ENCODE measurements at regions of chr6 and their contacts with region 1.

Region 1: DNA sequence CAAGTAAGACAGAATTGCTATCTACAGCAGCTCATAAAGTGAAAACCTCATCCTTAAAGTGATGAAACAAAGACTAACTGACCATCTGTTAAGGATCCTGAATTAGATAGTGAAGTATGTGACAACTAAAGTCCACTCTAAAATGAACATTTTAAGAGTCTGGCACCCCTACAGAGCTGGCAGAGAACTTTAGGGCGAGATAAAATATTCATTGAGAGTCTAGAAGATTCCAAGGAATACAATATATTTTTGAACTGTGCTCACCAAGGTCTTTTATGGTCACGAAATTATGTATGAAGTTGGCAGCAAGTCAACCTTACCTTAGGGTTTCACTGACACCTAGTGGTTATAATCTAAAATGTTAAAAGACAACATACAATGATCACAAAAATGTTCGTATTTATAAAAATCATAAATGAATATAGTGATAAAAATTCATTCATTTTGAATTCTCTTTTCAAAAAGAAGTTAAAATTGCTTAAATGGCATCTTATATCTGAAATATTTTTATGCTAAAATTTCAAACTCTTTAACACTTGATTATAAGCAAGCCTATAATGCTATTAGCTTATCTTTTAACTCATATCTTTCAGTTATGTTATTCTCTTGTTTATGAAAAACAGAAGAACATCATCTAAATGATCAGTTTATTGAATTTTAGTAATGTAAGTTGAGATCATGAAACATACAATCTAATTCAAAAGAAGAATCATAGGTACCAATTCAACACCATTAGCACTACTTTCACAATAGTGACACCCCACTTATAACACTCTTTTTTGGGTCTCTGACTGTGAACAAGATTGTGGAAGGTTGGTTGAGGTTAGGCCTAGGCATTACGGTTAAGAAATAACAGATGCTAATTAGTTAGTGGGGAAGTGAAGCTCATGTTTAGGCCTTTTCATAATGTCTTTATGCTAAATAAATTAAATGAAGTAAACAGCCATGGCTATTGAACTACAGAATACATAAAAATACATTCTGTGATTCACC is 27.5 kb downstream of the RSPH3 start:
- DNase-seq: peak; percentile 31
- ATAC-seq: peak; percentile 85
- H3K4me3 ChIP-seq: no peak overlapping the region
- H3K27ac ChIP-seq: no peak overlapping the region
- H3K4me1 ChIP-seq: no peaks in the 10 kb centered on the region
- H3K27me3 ChIP-seq: no peaks in the 10 kb centered on the region
- CTCF ChIP-seq: peak; percentile 33 to 68 (median 36); a peak in 4 of 6 replicates
- EP300 ChIP-seq: no peak
- POLR2A ChIP-seq: no peak
- RAD21 ChIP-seq: peak; percentile 81

Region 2: GRCh38 chr6:158686791-158687381 is 285.7 kb before region 1 on chr6:
- CTCF ChIA-PET with region 1: interaction called, 26 read pairs
- POLR2A ChIA-PET with region 1: no interaction called
- RAD21 ChIA-PET with region 1: interaction called, 18 read pairs
- SMC1A ChIA-PET with region 1: interaction called, 22 read pairs
- in situ Hi-C with region 1: no loop called
- intact Hi-C with region 1: no loop called
- DNase-seq: no peak
- ATAC-seq: peak; percentile 71
- H3K4me3 ChIP-seq: no peak overlapping the region
- H3K27ac ChIP-seq: no peak overlapping the region
- H3K4me1 ChIP-seq: peaks cover 13% of the 10 kb centered on the region
- H3K27me3 ChIP-seq: no peaks in the 10 kb centered on the region
- CTCF ChIP-seq: no peak
- EP300 ChIP-seq: no peak
- POLR2A ChIP-seq: no peak
- RAD21 ChIP-seq: no peak

Region 3: DNA sequence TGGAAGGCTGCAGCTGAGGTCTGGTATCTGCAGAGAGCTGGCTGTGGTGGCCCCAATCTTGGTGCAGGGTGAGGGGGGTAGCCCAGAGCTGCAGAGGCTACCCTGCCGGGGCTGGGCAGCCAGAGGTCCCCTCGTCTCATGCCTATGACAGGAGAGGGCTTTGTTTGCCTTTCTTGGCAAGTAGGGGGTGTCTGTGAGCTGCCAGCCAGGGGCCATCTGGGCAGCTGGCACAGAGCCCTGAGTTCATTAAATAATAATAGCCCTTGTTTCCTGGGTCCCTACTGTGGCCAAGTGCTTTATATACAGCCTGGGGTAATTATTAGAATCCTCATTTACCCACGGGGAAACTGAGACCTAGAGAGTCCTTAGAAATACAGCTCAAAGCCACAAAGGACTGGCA is 219.9 kb before region 1 on chr6:
- CTCF ChIA-PET with region 1: interaction called, 11 read pairs
- POLR2A ChIA-PET with region 1: interaction called, 3 read pairs
- RAD21 ChIA-PET with region 1: interaction called, 3 read pairs
- SMC1A ChIA-PET with region 1: interaction called, 7 read pairs
- in situ Hi-C with region 1: no loop called
- intact Hi-C with region 1: no loop called
- DNase-seq: no peak
- ATAC-seq: peak; percentile 78
- H3K4me3 ChIP-seq: no peak overlapping the region
- H3K27ac ChIP-seq: no peak overlapping the region
- H3K4me1 ChIP-seq: no peaks in the 10 kb centered on the region; the same call in 1 of the 2 replicates
- H3K27me3 ChIP-seq: no peaks in the 10 kb centered on the region
- CTCF ChIP-seq: peak in 2 of 3 experiments; percentile 21 to 22; a peak in 2 of 6 replicates
- EP300 ChIP-seq: no peak
- POLR2A ChIP-seq: no peak
- RAD21 ChIP-seq: no peak

Region 4: GRCh38 chr6:158808941-158809678 is 163.4 kb before region 1 on chr6:
- CTCF ChIA-PET with region 1: interaction called, 10 read pairs
- POLR2A ChIA-PET with region 1: no interaction called
- RAD21 ChIA-PET with region 1: interaction called, 8 read pairs
- SMC1A ChIA-PET with region 1: interaction called, 39 read pairs
- in situ Hi-C with region 1: no loop called
- intact Hi-C with region 1: no loop called
- DNase-seq: peak; percentile 80
- ATAC-seq: peak; percentile 69
- H3K4me3 ChIP-seq: peak overlapping the region; percentile 29; the same call in 1 of the 2 replicates
- H3K27ac ChIP-seq: peak overlapping the region; percentile 54
- H3K4me1 ChIP-seq: peaks cover 76% of the 10 kb centered on the region
- H3K27me3 ChIP-seq: no peaks in the 10 kb centered on the region
- CTCF ChIP-seq: no peak
- EP300 ChIP-seq: peak; percentile 75 to 91
- POLR2A ChIP-seq: no peak
- RAD21 ChIP-seq: no peak

Region 5: GRCh38 chr6:158938811-158939254 is 33.7 kb before region 1 on chr6:
- CTCF ChIA-PET with region 1: no interaction called
- POLR2A ChIA-PET with region 1: no interaction called
- RAD21 ChIA-PET with region 1: no interaction called
- SMC1A ChIA-PET with region 1: no interaction called
- in situ Hi-C with region 1: no loop called
- intact Hi-C with region 1: no loop called
- DNase-seq: no peak
- ATAC-seq: peak; percentile 87
- H3K4me3 ChIP-seq: peak overlapping the region; percentile 55
- H3K27ac ChIP-seq: no peak overlapping the region
- H3K4me1 ChIP-seq: peaks cover 9% of the 10 kb centered on the region
- H3K27me3 ChIP-seq: no peaks in the 10 kb centered on the region
- CTCF ChIP-seq: no peak
- EP300 ChIP-seq: no peak
- POLR2A ChIP-seq: no peak
- RAD21 ChIP-seq: no peak

Region 6: DNA sequence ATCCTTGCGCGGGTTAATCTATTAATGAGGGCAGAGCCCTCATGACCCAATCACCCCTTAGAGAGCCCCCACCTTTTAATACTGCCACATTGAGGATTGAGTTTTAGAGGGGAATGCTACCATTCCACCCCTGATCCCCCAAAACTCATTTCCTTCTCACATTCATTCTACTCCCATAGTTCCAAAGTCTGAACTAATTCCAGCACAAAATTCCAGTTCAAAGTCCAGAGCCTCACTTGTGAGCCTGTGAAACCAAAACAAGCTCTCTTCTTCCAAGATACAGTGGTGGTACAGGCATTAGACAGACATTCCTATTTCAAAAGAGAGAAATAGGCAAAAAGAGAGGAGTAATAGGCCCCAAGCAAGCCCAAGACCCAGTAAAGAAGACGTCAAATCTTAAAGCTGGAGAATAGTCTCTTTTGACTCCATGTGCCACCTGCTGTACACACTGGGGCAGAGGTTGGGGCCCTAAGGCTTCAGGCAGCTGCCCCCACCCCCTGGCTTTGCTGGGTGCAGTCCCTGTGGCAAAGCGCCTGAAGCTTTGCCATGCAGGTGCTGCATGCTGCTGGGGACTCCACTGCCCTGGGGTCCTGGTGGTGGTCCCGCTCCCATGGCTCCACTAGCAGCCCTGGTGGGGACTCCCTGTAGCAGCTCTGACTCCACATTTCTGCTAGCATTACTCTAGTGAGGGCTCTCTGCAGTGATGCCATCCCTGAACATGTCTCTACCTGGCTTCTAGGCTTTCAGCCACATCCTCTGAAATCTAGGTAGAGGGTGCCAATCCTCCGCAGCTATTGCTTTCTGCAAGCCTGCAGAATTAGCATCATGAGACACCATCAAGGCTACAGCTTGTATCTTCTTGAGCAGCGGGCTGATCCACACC is 13.8 kb before region 1 on chr6:
- CTCF ChIA-PET with region 1: interaction called, 12 read pairs
- POLR2A ChIA-PET with region 1: interaction called, 3 read pairs
- RAD21 ChIA-PET with region 1: interaction called, 8 read pairs
- SMC1A ChIA-PET with region 1: interaction called, 10 read pairs
- in situ Hi-C with region 1: no loop called
- intact Hi-C with region 1: no loop called
- DNase-seq: no peak
- ATAC-seq: peak; percentile 86
- H3K4me3 ChIP-seq: no peak overlapping the region
- H3K27ac ChIP-seq: no peak overlapping the region
- H3K4me1 ChIP-seq: no peaks in the 10 kb centered on the region
- H3K27me3 ChIP-seq: no peaks in the 10 kb centered on the region
- CTCF ChIP-seq: peak; percentile 28 to 46 (median 36); a peak in 4 of 6 replicates
- EP300 ChIP-seq: no peak
- POLR2A ChIP-seq: no peak
- RAD21 ChIP-seq: peak; percentile 54

Region 7: DNA sequence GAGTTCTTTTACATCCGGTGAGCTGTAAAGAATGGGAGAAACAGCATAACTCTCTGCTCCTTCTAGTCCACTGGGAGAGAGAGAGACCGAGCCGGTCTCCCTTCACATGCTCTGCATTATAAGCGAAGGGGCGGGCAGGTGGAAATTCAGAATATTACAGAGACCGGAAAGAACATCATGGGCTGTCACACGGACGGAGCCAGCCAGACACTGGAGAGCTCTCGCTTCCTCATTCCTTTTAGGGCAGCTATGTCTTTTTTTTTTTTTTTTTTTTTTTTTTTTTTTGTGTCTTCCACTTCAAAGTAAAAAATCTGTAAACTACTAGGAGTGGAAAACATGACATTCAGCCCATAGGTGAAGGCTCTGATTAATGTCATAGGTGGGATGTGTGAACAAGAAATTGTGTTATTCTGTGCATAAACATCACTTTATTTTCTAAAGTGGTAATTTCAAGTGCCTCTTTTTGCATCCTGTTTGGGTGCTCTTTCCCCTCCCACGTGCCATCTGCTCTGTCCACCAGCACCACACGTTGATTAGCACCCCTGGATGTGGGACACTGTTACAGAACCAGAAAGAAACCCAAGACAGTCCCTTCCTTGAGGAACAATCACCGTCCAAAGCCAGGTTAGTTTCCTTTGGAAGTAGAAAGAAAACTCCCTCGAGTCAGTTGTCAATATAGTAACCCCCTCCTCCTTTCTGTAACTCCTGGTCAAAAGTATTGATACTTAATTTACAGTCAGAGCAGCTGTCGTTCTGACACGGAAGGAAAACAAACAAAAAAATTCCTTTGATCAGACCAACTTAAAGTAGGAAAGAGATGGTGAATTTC is 72.6 kb after region 1 on chr6 and contains the start of gene TAGAP:
- CTCF ChIA-PET with region 1: no interaction called
- POLR2A ChIA-PET with region 1: no interaction called
- RAD21 ChIA-PET with region 1: no interaction called
- SMC1A ChIA-PET with region 1: no interaction called
- in situ Hi-C with region 1: no loop called
- intact Hi-C with region 1: no loop called
- DNase-seq: peak; percentile 63
- ATAC-seq: peak; percentile 89
- H3K4me3 ChIP-seq: peak within 1 kb of the TSS; percentile 60
- H3K27ac ChIP-seq: peak within 1 kb of the TSS; percentile 50
- H3K4me1 ChIP-seq: peaks cover 26% of the 10 kb centered on the region
- H3K27me3 ChIP-seq: no peaks in the 10 kb centered on the region
- CTCF ChIP-seq: no peak
- EP300 ChIP-seq: no peak
- POLR2A ChIP-seq: peak; percentile 57; the same call in 1 of the 2 replicates
- RAD21 ChIP-seq: no peak; the same call in 1 of the 2 replicates
- polyA plus RNA-seq, gene TAGAP: 5.3 to 5.4 TPM

Region 8: DNA sequence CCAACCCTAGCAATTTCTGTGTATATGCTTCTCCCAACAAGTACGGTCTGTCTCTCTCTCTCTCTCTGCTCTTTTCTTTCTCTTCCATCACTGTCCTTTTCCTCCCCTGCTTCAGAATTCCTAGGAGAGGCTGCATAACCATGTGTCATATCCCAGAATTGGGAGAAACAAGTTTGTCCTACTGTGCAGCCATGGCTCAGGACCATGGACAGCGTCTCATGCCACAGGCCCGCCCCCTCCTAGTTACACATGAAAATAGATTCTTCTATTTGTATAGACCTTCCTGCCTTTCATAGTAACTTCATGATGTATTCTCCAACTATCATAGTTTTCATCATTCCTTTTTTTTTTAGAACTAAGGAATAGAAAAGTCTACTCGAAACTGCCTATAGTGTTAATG is 294.6 kb after region 1 on chr6:
- CTCF ChIA-PET with region 1: no interaction called
- POLR2A ChIA-PET with region 1: no interaction called
- RAD21 ChIA-PET with region 1: no interaction called
- SMC1A ChIA-PET with region 1: no interaction called
- in situ Hi-C with region 1: no loop called
- intact Hi-C with region 1: no loop called
- DNase-seq: no peak
- ATAC-seq: no peak
- H3K4me3 ChIP-seq: no peak overlapping the region
- H3K27ac ChIP-seq: no peak overlapping the region
- H3K4me1 ChIP-seq: no peaks in the 10 kb centered on the region
- H3K27me3 ChIP-seq: no peaks in the 10 kb centered on the region
- CTCF ChIP-seq: no peak
- EP300 ChIP-seq: no peak
- POLR2A ChIP-seq: no peak
- RAD21 ChIP-seq: no peak